Activated CD4-positive, alpha-beta memory T cell treated with anti-CD3 and anti-CD28 coated beads for 36 hours (primary cell): ENCODE measurements at regions of chr1 and their contacts with region 1.

Region 1: GRCh38 chr1:72557446-72558049 is 275.2 kb upstream of the NEGR1 start:
- DNase-seq: no peak
- H3K4me3 Mint-ChIP-seq: no peak overlapping the region
- H3K27ac Mint-ChIP-seq: no peak overlapping the region
- H3K4me1 Mint-ChIP-seq: no peaks in the 10 kb centered on the region
- H3K27me3 Mint-ChIP-seq: no peaks in the 10 kb centered on the region

Region 2: GRCh38 chr1:71843012-71843411 is 714.5 kb before region 1 on chr1:
- CTCF ChIA-PET with region 1: no interaction called
- POLR2A ChIA-PET with region 1: no interaction called
- intact Hi-C with region 1: loop called (anchors 5 kb)
- DNase-seq: no peak
- H3K4me3 Mint-ChIP-seq: no peak overlapping the region
- H3K27ac Mint-ChIP-seq: no peak overlapping the region
- H3K4me1 Mint-ChIP-seq: no peaks in the 10 kb centered on the region
- H3K27me3 Mint-ChIP-seq: no peaks in the 10 kb centered on the region